IMR-90 (cell line): ENCODE measurements at regions of chr1 and their contacts with region 1.

Region 1: GRCh38 chr1:204544321-204544720 is 28.1 kb downstream of the MDM4 start:
- DNase-seq: peak; percentile 54
- ATAC-seq: no peak; the same call in 1 of the 2 replicates
- H3K4me3 ChIP-seq: no peak overlapping the region
- H3K27ac ChIP-seq: no peak overlapping the region
- H3K4me1 ChIP-seq: no peaks in the 10 kb centered on the region
- H3K27me3 ChIP-seq: no peaks in the 10 kb centered on the region
- CTCF ChIP-seq: no peak
- POLR2A ChIP-seq: no peak
- RAD21 ChIP-seq: no peak

Region 2: GRCh38 chr1:203593723-203594122 is 950.6 kb before region 1 on chr1:
- CTCF ChIA-PET with region 1: no interaction called
- POLR2A ChIA-PET with region 1: no interaction called
- dilution Hi-C with region 1: no loop called
- in situ Hi-C with region 1: no loop called
- intact Hi-C with region 1: no loop called
- DNase-seq: peak; percentile 72
- ATAC-seq: peak; percentile 4; the same call in 1 of the 2 replicates
- H3K4me3 ChIP-seq: no peak overlapping the region
- H3K27ac ChIP-seq: no peak overlapping the region
- H3K4me1 ChIP-seq: peaks cover 25% of the 10 kb centered on the region
- H3K27me3 ChIP-seq: no peaks in the 10 kb centered on the region
- CTCF ChIP-seq: no peak
- POLR2A ChIP-seq: no peak
- RAD21 ChIP-seq: no peak

Region 3: GRCh38 chr1:204588824-204589223 is 44.5 kb after region 1 on chr1:
- CTCF ChIA-PET with region 1: no interaction called
- POLR2A ChIA-PET with region 1: interaction called, 26 read pairs
- dilution Hi-C with region 1: no loop called
- in situ Hi-C with region 1: no loop called
- intact Hi-C with region 1: no loop called
- DNase-seq: no peak
- ATAC-seq: no peak
- H3K4me3 ChIP-seq: no peak overlapping the region
- H3K27ac ChIP-seq: no peak overlapping the region
- H3K4me1 ChIP-seq: peaks cover 11% of the 10 kb centered on the region
- H3K27me3 ChIP-seq: peaks cover 2% of the 10 kb centered on the region; the same call in 1 of the 2 replicates
- CTCF ChIP-seq: no peak
- POLR2A ChIP-seq: no peak
- RAD21 ChIP-seq: no peak

Region 4: DNA sequence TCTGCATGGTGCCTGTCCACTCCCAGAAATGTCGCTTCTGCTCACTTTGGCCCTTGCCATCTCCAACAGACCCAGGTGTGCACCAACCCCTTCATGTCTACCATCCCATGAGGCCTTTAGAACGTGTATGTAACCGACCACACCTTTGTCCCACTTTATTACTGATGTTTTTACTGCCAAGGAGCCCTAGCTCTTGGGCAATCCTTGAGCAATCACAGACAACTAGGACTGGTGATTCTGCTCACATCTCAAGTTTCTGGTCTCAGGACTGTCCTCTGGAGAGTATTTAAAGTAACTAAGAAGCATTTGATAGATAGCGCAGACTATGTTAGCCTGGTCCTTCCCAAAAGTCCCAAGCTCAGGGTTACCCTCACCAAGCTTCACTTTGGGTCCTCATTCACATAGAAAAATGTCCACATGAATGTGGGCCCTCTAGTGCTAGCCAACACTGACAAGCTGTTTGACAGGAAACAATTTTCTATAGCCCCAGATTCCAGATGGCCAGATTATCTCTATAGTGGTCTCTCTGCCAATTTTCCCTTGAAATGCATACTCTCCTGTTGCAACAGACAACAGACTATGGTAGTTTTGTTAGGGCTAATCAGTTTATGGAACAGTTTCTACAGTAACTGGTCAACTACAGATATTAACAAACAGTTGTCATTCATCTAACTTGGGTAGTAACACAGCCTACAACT is 546.9 kb after region 1 on chr1:
- CTCF ChIA-PET with region 1: no interaction called
- POLR2A ChIA-PET with region 1: no interaction called
- dilution Hi-C with region 1: no loop called
- in situ Hi-C with region 1: no loop called
- intact Hi-C with region 1: loop called (anchors 10 kb)
- DNase-seq: peak; percentile 38
- ATAC-seq: peak; percentile 43
- H3K4me3 ChIP-seq: no peak overlapping the region
- H3K27ac ChIP-seq: no peak overlapping the region; the same call in 1 of the 2 replicates
- H3K4me1 ChIP-seq: peaks cover 4% of the 10 kb centered on the region; the same call in 1 of the 2 replicates
- H3K27me3 ChIP-seq: no peaks in the 10 kb centered on the region
- CTCF ChIP-seq: no peak
- POLR2A ChIP-seq: no peak
- RAD21 ChIP-seq: no peak

Region 5: GRCh38 chr1:205488086-205488723 is 943.9 kb after region 1 on chr1:
- CTCF ChIA-PET with region 1: no interaction called
- POLR2A ChIA-PET with region 1: no interaction called
- dilution Hi-C with region 1: no loop called
- in situ Hi-C with region 1: no loop called
- intact Hi-C with region 1: no loop called
- DNase-seq: peak; percentile 59
- ATAC-seq: peak; percentile 86
- H3K4me3 ChIP-seq: no peak overlapping the region
- H3K27ac ChIP-seq: no peak overlapping the region
- H3K4me1 ChIP-seq: peaks cover 3% of the 10 kb centered on the region; the same call in 1 of the 2 replicates
- H3K27me3 ChIP-seq: peaks cover 43% of the 10 kb centered on the region
- CTCF ChIP-seq: peak; percentile 73
- POLR2A ChIP-seq: no peak
- RAD21 ChIP-seq: peak; percentile 68